Activated CD4-positive, alpha-beta T cell treated with anti-CD3 and anti-CD28 coated beads, Interleukin-2, amount 10 ng/mL, durations not matched to agents 24 days and 14 days (primary cell): ENCODE measurements at regions of chr2 and their contacts with region 1.

Region 1: DNA sequence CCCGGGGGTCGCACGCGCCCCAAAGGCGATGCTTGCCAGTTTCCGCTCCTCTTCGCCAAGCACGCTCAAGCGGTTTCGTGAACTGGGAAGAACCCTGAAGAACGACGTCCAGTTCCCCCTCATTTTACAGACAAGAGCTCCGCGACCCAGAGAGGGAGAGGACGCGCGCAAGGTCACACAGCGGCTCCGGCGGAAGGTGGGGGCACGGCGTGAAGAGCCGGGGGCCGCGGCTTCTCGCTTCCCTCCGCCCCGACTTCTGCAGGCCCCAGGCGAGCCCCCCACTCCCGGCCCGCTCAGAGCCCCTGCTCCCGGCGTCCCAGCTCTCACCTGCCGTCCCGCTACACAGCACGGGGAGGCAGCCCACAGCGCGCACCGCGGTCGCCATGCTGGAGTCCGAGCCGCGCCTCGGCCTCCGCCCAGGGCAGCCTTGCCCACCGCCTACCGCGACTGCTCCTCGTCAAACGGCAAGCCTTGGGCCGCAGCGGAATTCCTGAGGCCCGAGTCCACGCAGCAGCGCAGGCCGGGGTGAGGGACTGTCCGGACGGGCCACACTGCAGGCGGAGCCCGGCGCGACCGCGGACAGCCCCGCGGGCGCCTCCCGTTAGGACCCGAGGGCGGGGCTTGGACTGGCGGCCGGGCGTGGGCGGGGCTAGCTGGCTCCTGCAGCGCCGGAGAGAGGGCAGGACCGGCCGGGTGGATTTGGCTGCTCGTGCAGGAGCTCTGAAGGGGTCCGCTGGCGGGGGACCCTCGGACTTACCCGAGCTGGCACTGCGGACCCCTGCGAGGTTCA is at the start of gene MRPS5:
- DNase-seq: peak; percentile 97
- H3K4me3 Mint-ChIP-seq: peak within 1 kb of the TSS; percentile 98
- H3K27ac Mint-ChIP-seq: peak within 1 kb of the TSS; percentile 96
- H3K4me1 Mint-ChIP-seq: peaks cover 40% of the 10 kb centered on the region
- H3K27me3 Mint-ChIP-seq: no peaks in the 10 kb centered on the region
- total RNA-seq, gene MRPS5: 97.4 and 103 TPM in 2 replicates

Region 2: GRCh38 chr2:94939349-94939748 is 182.3 kb before region 1 on chr2:
- intact Hi-C with region 1: no loop called
- DNase-seq: no peak
- H3K4me3 Mint-ChIP-seq: no peak overlapping the region
- H3K27ac Mint-ChIP-seq: no peak overlapping the region
- H3K4me1 Mint-ChIP-seq: no peaks in the 10 kb centered on the region
- H3K27me3 Mint-ChIP-seq: peaks cover 17% of the 10 kb centered on the region

Region 3: GRCh38 chr2:94982675-94983074 is 138.9 kb before region 1 on chr2:
- intact Hi-C with region 1: no loop called
- DNase-seq: no peak
- H3K4me3 Mint-ChIP-seq: no peak overlapping the region
- H3K27ac Mint-ChIP-seq: no peak overlapping the region
- H3K4me1 Mint-ChIP-seq: no peaks in the 10 kb centered on the region
- H3K27me3 Mint-ChIP-seq: peaks cover 7% of the 10 kb centered on the region

Region 4: GRCh38 chr2:95159690-95160449 is 38.3 kb after region 1 on chr2 and contains the start of gene ZNF514:
- intact Hi-C with region 1: loop called (anchors 1 kb)
- DNase-seq: peak; percentile 95
- H3K4me3 Mint-ChIP-seq: peak within 1 kb of the TSS; percentile 89
- H3K27ac Mint-ChIP-seq: peak within 1 kb of the TSS; percentile 90
- H3K4me1 Mint-ChIP-seq: peaks cover 20% of the 10 kb centered on the region
- H3K27me3 Mint-ChIP-seq: no peaks in the 10 kb centered on the region
- total RNA-seq, gene ZNF514: 8.2 and 8.3 TPM in 2 replicates

Region 5: GRCh38 chr2:95165129-95166064 is 43.8 kb after region 1 on chr2 and contains the start of gene ZNF2:
- intact Hi-C with region 1: loop called (anchors 1 kb)
- DNase-seq: peak; percentile 99
- H3K4me3 Mint-ChIP-seq: peak within 1 kb of the TSS; percentile 98
- H3K27ac Mint-ChIP-seq: peak within 1 kb of the TSS; percentile 97
- H3K4me1 Mint-ChIP-seq: peaks cover 26% of the 10 kb centered on the region
- H3K27me3 Mint-ChIP-seq: no peaks in the 10 kb centered on the region
- total RNA-seq, gene ZNF2: 4.4 and 5.4 TPM in 2 replicates

Region 6: DNA sequence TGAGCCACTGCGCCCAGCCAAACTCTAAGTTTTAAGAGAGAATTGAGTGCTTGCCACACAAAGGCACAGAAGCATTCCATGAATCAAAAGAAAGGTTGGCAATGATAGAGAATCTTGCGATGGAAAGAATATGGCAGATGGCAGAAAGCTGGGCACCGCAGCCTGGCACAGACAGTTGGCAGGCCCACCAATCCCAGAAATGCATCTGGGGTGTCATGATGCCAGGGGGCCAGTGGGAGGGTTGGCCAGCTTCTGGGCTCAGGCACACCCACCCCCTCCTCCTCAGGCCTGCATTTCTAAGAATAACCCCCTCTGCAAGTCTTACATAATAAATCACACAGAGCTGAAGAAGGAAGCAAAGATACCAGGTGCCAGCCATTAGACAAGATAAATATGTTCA is 63.6 kb after region 1 on chr2:
- intact Hi-C with region 1: no loop called
- DNase-seq: no peak
- H3K4me3 Mint-ChIP-seq: no peak overlapping the region
- H3K27ac Mint-ChIP-seq: no peak overlapping the region
- H3K4me1 Mint-ChIP-seq: no peaks in the 10 kb centered on the region
- H3K27me3 Mint-ChIP-seq: peaks cover 2% of the 10 kb centered on the region

Region 7: DNA sequence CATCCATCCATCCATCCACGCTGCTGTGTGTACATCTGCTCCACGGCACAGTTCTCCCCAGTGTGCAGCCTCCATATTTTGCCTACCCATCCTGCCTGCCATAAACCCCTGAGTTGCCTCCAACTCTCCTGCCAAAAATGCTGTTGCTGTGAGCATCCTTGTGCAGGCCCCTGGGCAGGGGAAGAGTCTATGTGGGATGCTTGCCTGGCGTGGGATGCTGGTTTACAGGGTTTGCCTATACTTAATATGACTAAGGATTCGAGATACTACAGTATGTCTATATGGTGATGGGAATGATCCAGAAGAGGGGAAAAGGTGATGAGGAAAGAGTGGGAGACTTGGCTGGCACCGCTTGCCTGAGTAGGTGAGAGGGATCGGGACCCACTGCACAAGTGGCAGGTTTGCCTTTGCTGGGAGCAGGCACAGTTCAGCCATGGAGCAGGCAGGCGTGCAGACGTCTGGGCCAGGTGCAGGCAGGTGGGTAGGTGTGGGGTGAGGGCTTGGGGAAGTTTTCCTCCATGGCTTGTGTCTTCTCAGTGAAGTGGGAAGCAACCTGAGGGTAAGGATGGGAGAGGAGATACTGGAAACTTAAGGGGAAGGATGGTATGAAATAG is 250.7 kb after region 1 on chr2:
- intact Hi-C with region 1: no loop called
- DNase-seq: no peak
- H3K4me3 Mint-ChIP-seq: no peak overlapping the region
- H3K27ac Mint-ChIP-seq: no peak overlapping the region
- H3K4me1 Mint-ChIP-seq: peaks cover 2% of the 10 kb centered on the region
- H3K27me3 Mint-ChIP-seq: peaks cover 2% of the 10 kb centered on the region